ENCODE measurements at regions of chr17 and their contacts with region 1.

Region 1: DNA sequence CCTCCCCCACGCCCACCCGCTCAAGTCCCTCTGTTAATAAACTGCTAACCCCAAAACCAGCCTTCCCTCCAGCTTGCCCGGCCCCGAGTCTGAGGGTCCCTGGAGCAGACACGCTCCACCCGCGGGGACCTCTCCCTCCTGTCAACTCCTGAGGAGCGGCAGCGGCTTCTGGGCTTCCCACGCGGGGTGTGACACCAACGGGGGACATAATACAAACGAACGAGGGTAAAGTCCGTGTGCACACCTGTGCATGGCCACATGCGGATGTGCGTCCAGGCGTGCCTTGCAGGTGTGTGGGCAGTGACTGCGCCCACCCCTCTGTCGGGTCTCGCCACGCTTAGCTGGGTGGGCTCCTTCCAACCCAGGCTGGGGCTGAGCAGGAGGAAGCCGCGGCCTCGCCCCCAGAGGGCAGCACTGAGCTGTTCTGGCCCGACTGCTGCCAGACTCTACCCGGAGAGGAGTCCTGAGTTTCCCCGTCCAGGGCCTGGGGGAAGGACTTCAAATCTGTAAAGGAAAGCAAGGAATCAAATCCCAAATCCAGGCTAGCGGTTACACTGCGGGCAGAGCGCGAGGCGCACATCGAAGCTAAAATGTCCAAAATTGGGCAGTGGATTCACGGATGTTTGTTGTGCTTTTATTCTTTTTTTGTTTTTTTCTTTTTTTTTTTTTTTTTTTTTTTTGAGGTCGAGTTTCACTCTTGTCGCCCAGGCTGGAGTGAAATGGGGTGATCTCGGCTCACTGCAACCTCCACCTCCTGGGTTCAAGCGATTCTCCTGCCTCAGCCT is 24.2 kb upstream of the KRT17 start:
- DNase-seq: peak; percentile 95

Region 2: DNA sequence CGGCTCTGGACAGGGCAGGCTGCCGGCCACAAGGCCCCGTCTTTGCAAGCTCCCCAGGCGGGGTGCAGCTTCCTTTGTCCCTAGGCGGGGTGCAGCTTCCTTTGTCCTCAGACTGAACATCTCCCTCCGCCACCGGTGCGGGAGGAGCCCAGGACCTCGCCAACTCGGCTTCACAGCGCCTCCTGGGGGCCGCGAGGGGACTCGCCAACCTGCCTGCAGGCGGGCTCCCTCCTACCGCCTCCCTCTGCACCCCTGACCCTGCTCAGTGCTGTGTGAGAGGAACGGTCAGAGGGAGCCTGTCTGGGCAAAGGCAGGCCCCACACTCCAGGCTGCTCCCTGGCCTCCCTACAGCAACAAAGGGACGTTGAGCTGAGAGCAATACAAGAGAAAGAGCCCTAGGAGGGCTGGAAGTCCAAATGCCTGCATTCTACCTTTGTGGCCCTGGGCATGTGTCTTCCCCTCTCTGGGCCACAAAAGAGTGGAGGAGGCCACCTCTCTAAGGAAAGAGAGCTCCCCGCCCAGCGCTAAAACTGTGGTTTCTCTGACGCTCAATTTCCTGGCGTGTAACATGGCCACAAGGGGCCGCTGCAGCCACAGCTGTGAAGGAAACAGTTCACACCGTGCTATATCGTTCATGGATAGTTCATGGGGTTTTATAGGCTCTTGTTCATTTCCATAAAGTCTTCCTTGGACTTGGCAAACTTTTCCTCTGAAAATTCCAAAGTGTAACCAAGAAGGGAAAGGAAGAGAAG is 99.6 kb before region 1 on chr17:
- intact Hi-C with region 1: loop called (anchors 5 to 10 kb)
- DNase-seq: peak; percentile 96

Measured in posterior vena cava (tissue), 2 donors.